ENCODE measurements at regions of chr16 and their contacts with region 1.

Region 1: DNA sequence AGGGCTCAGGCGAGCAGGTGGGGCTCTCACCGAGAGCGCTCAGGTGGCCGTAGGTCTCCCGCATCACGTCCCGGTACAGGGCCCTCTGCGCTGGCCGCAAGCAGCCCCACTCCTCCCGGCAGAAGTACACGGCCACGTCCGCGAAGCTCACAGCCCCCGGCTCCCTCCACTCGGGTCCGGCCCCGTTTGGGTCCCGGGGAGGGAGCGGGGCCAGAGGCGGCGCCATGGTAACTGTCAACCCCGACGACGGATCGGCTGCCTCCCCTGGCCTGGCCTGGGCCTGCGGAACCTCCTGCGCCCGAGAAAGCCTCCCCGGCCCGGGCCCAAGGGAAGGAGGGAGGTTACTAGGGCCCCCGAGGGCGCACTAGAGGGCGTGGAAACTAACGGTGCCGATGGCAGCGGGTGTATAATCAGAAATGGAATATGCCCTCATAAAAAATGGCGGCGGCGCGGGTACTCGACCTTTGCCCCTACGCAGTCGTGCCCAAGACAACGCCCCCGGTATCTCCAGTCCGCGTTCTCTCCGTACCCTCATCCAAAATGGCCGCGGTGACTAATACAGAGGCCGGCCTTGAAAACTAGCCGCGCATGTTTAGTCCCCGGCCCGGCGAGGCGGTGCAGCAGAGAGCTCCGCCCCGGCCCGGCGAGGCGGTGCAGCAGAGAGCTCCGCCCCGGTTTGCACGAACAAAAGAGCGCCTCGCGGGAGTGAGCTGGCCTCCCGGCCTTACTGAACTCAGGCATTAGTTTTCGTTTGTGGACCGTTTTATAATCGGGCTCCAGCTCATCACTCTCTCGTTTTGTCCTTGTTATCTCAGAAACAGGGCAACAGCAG is at the start of gene ZNF764:
- DNase-seq: peak; percentile 97
- H3K4me3 Mint-ChIP-seq: peak within 1 kb of the TSS; percentile 83
- H3K27ac Mint-ChIP-seq: peak within 1 kb of the TSS; percentile 95
- H3K4me1 Mint-ChIP-seq: peaks cover 35% of the 10 kb centered on the region
- H3K27me3 Mint-ChIP-seq: peaks cover 1% of the 10 kb centered on the region
- total RNA-seq, gene ZNF764: 14.5 and 14.6 TPM in 2 replicates

Region 2: DNA sequence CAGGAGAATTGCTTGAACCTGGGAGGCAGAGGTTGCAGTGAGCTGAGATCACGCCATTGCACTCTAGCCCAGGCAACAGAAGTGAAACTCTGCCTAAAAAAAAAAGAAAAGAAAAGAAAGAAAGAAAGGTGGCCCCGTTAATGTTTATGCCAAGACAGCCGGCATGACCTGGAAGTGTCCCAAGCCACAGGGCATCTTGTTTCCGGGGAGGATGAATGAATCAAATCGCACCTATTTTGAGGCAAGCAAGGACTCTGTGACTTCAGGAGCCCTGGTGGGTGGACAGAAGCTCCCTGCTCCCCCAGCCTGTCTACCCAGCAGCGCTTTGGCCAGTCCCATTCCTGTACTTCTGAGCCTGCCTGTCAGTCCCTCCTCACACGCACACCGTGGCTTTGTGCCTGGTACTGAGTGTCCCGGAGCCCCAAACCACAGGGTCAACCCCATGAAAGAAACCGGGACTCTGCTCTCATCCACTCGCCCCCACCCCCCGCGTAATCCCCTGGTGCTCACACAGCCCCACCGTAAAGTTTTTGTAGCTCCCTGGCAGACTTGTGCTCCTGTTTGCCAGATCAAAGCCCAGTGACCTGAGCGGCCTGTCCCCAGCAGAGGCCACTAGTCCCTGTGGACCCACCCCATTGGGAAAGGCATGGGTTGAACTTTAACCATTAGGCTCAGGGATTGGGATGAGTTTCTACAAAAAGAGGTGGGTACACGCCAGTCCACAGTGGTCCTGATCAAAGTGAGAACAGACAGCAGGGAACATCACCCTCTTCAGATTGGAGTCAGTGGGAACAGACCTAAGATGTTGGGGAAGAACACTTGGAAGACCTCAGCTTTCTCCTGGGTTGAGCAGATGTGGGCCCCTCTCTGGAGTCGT is 222.3 kb before region 1 on chr16:
- intact Hi-C with region 1: loop called (anchors 1 kb)
- DNase-seq: no peak
- H3K4me3 Mint-ChIP-seq: peak overlapping the region; percentile 83
- H3K27ac Mint-ChIP-seq: peak overlapping the region; percentile 73
- H3K4me1 Mint-ChIP-seq: peaks cover 15% of the 10 kb centered on the region
- H3K27me3 Mint-ChIP-seq: no peaks in the 10 kb centered on the region

Region 3: DNA sequence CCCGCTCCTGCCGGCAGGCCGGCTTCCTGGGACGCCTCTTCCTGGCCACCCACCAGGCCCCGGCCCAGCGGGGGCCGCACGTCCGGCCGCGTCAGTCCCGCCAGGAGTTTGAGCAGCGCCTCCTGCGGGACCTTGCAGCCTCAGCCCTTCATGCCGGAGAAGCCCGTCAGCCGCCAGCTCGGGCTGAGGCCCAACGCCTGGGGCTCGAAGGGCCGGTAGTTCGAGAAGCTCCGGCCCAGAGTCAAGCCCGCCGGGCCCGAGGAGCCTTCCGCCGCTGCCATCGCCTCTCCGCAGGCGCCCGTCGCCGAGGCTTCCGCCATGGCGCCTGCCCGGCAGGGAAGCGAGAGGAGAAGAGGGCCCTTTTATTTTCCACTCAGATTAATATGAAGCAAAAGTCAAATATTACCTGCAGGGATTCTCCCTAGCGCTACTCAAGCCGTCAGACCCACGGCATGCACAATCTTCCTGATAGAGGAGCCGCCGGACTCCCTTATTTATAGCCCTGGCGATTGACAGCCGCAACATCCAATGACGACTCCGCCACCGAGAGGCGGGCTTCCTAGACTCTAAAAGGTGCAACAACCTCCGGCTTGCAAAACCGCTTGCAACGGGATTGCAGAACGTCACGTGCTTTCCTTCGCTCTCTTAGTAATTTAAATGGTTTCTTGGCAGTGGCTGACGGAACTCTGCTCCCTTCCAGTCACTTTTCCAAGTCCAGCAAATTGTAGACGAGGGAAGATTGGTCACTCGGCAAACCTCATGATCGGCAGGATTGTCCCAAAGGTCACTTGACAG is 112.6 kb before region 1 on chr16 and contains the start of gene SEPHS2:
- intact Hi-C with region 1: no loop called
- DNase-seq: peak; percentile 95
- H3K4me3 Mint-ChIP-seq: peak within 1 kb of the TSS; percentile 88
- H3K27ac Mint-ChIP-seq: peak within 1 kb of the TSS; percentile 94
- H3K4me1 Mint-ChIP-seq: peaks cover 45% of the 10 kb centered on the region
- H3K27me3 Mint-ChIP-seq: no peaks in the 10 kb centered on the region
- total RNA-seq, gene SEPHS2: 82.9 and 84.1 TPM in 2 replicates